Activated CD4-positive, alpha-beta T cell treated with anti-CD3 and anti-CD28 coated beads, Interleukin-2, amount 10 ng/mL, durations not matched to agents 24 days and 14 days (primary cell): ENCODE measurements at regions of chr6 and their contacts with region 1.

Region 1: GRCh38 chr6:112117554-112117953 is 30.2 kb downstream of the FAM229B start:
- DNase-seq: peak; percentile 58
- H3K4me3 Mint-ChIP-seq: peak overlapping the region; percentile 13
- H3K27ac Mint-ChIP-seq: peak overlapping the region; percentile 82
- H3K4me1 Mint-ChIP-seq: peaks cover 14% of the 10 kb centered on the region
- H3K27me3 Mint-ChIP-seq: peaks cover 9% of the 10 kb centered on the region

Region 2: DNA sequence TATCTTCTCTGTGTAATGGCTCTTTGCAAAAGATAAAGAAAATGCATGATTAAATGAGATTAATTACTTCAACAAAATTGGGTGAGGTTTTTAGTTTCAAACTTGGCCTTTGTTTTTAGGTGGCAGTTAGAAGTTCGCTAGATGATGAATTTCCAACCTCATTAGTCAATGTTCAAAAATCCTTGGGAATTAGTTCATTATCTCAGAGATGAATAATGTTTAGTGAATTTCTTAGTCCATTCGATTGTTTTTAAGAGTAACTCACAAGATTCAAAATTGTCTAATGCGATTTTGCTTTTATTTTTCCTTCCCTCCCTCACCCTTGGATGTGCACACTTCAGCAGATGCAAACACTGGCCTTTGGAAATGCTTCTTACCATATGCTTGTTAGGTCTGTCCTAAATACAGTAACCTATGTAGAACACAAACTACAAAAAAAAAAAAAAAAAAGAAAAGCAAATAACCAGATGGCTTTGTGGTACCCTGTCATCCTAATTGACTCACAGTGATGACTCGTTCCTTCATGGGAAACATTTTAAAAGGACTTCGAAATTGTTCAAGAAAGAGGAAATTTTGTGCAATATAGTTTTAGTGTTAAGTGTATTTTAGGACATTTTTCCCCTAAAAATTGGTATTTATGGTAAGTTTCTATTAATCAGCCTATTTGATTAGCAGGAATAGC is 36.5 kb after region 1 on chr6:
- intact Hi-C with region 1: loop called (anchors 5 kb)
- DNase-seq: no peak
- H3K4me3 Mint-ChIP-seq: peak overlapping the region; percentile 43
- H3K27ac Mint-ChIP-seq: no peak overlapping the region
- H3K4me1 Mint-ChIP-seq: peaks cover 20% of the 10 kb centered on the region
- H3K27me3 Mint-ChIP-seq: peaks cover 21% of the 10 kb centered on the region